Common myeloid progenitor, CD34-positive (primary cell): ENCODE measurements at regions of chr12 and their contacts with region 1.

Region 1: GRCh38 chr12:4857472-4858291 is 52.0 kb upstream of the KCNA1 start:
- DNase-seq: peak; percentile 79 to 91 (median 91)
- H3K4me3 ChIP-seq: peak overlapping the region in 5 of 7 experiments; percentile 11 to 70 (median 39)
- H3K27ac ChIP-seq: no peak overlapping the region
- H3K4me1 ChIP-seq: peaks cover 0 to 25% (median 9%) of the 10 kb centered on the region in 4 experiments
- H3K27me3 ChIP-seq: peaks cover 0 to 14% (median 6%) of the 10 kb centered on the region in 5 experiments

Region 2: GRCh38 chr12:4665236-4665635 is 192.4 kb before region 1 on chr12:
- CTCF ChIA-PET with region 1: no interaction called
- POLR2A ChIA-PET with region 1: no interaction called
- DNase-seq: no peak
- H3K4me3 ChIP-seq: no peak overlapping the region
- H3K27ac ChIP-seq: no peak overlapping the region
- H3K4me1 ChIP-seq: peaks cover 0 to 2% (median 0%) of the 10 kb centered on the region in 4 experiments
- H3K27me3 ChIP-seq: no peaks in the 10 kb centered on the region

Region 3: DNA sequence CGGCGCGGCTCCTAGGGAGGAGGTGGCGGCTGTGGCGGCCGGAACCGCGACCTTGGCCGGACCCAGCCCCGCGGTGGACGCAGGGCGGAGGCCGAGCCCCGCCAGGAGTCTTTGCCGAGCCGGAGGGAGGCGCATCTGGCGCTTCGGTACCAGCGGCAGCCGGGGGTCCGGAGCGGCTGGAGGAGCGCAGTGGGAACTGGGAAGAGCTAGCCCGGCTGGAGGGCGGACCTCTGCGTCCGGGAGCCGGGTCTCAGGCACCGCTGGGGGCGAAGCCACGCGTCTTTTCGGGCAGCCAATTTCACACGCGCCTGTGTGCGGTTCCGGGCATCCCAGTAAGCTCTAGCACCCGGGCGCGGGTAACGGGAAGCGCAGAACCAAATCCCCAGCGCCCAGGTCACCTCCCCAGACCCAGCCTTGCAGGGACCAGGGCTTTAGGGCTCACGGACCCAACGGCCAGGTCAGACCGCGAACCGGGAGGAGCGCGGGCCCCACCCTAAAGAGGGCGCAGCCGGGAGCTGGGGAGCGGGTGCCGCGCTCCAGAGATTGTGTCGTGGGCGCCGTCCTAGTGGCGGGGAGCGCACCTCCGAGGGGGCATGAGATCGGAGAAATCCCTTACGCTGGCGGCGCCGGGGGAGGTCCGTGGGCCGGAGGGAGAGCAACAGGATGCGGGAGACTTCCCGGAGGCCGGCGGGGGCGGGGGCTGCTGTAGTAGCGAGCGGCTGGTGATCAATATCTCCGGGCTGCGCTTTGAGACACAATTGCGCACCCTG is 48.0 kb before region 1 on chr12:
- CTCF ChIA-PET with region 1: interaction called, 13 read pairs
- POLR2A ChIA-PET with region 1: no interaction called
- DNase-seq: peak in 2 of 3 donors; percentile 31 to 44
- H3K4me3 ChIP-seq: peak overlapping the region; percentile 40 to 73 (median 60)
- H3K27ac ChIP-seq: no peak overlapping the region
- H3K4me1 ChIP-seq: peaks cover 0 to 35% (median 27%) of the 10 kb centered on the region in 4 experiments
- H3K27me3 ChIP-seq: peaks cover 0 to 25% (median 9%) of the 10 kb centered on the region in 5 experiments

Region 4: GRCh38 chr12:4830556-4831210 is 27.0 kb before region 1 on chr12:
- CTCF ChIA-PET with region 1: interaction called, 19 read pairs
- POLR2A ChIA-PET with region 1: no interaction called
- DNase-seq: peak in 2 of 3 donors; percentile 24 to 34
- H3K4me3 ChIP-seq: peak overlapping the region in 2 of 7 experiments; percentile 41 to 62
- H3K27ac ChIP-seq: no peak overlapping the region
- H3K4me1 ChIP-seq: peaks cover 28 to 57% (median 46%) of the 10 kb centered on the region in 4 experiments
- H3K27me3 ChIP-seq: no peaks in the 10 kb centered on the region

Region 5: GRCh38 chr12:4934407-4935035 is 76.8 kb after region 1 on chr12:
- CTCF ChIA-PET with region 1: interaction called, 10 read pairs
- POLR2A ChIA-PET with region 1: no interaction called
- DNase-seq: peak; percentile 35 to 83 (median 70)
- H3K4me3 ChIP-seq: no peak overlapping the region
- H3K27ac ChIP-seq: no peak overlapping the region
- H3K4me1 ChIP-seq: peaks cover 7 to 49% (median 21%) of the 10 kb centered on the region in 4 experiments
- H3K27me3 ChIP-seq: peaks cover 0 to 3% (median 0%) of the 10 kb centered on the region in 5 experiments

Region 6: GRCh38 chr12:5003020-5003666 is 145.5 kb after region 1 on chr12:
- CTCF ChIA-PET with region 1: interaction called, 110 read pairs
- POLR2A ChIA-PET with region 1: interaction called, 4 read pairs
- DNase-seq: peak; percentile 60 to 78 (median 72)
- H3K4me3 ChIP-seq: no peak overlapping the region
- H3K27ac ChIP-seq: no peak overlapping the region
- H3K4me1 ChIP-seq: no peaks in the 10 kb centered on the region
- H3K27me3 ChIP-seq: peaks cover 0 to 10% (median 0%) of the 10 kb centered on the region in 5 experiments

Region 7: GRCh38 chr12:5083955-5084849 is 226.5 kb after region 1 on chr12:
- CTCF ChIA-PET with region 1: interaction called, 23 read pairs
- POLR2A ChIA-PET with region 1: no interaction called
- DNase-seq: peak; percentile 51 to 75 (median 63)
- H3K4me3 ChIP-seq: no peak overlapping the region
- H3K27ac ChIP-seq: no peak overlapping the region
- H3K4me1 ChIP-seq: no peaks in the 10 kb centered on the region
- H3K27me3 ChIP-seq: peaks cover 0 to 11% (median 0%) of the 10 kb centered on the region in 5 experiments